Naive thymus-derived CD4-positive, alpha-beta T cell (primary cell): ENCODE measurements at regions of chr6 and their contacts with region 1.

Region 1: GRCh38 chr6:19035461-19036195 is 648.5 kb downstream of the RNF144B start:
- DNase-seq: no peak
- ATAC-seq: no peak
- H3K4me3 ChIP-seq: no peak overlapping the region
- H3K4me3 Mint-ChIP-seq: no peak overlapping the region
- H3K27ac ChIP-seq: no peak overlapping the region
- H3K27ac Mint-ChIP-seq: no peak overlapping the region
- H3K4me1 ChIP-seq: no peaks in the 10 kb centered on the region
- H3K4me1 Mint-ChIP-seq: no peaks in the 10 kb centered on the region
- H3K27me3 ChIP-seq: no peaks in the 10 kb centered on the region
- H3K27me3 Mint-ChIP-seq: no peaks in the 10 kb centered on the region

Region 2: GRCh38 chr6:19052219-19052618 is 16.6 kb after region 1 on chr6:
- CTCF ChIA-PET with region 1: no interaction called
- POLR2A ChIA-PET with region 1: no interaction called
- intact Hi-C with region 1: loop called in 1 of 2 experiments (anchors 1 kb)
- DNase-seq: no peak
- ATAC-seq: no peak
- H3K4me3 ChIP-seq: no peak overlapping the region
- H3K4me3 Mint-ChIP-seq: no peak overlapping the region
- H3K27ac ChIP-seq: no peak overlapping the region
- H3K27ac Mint-ChIP-seq: no peak overlapping the region
- H3K4me1 ChIP-seq: no peaks in the 10 kb centered on the region
- H3K4me1 Mint-ChIP-seq: no peaks in the 10 kb centered on the region
- H3K27me3 ChIP-seq: no peaks in the 10 kb centered on the region
- H3K27me3 Mint-ChIP-seq: no peaks in the 10 kb centered on the region